OCI-LY7 (cell line): ENCODE measurements at regions of chr1 and their contacts with region 1.

Region 1: GRCh38 chr1:61049850-61050540 is 32.4 kb upstream of the NFIA start:
- DNase-seq: peak; percentile 81
- H3K4me3 ChIP-seq: peak overlapping the region; percentile 71
- H3K27ac ChIP-seq: no peak overlapping the region
- H3K4me1 ChIP-seq: peaks cover 10% of the 10 kb centered on the region
- CTCF ChIP-seq: peak; percentile 94

Region 2: DNA sequence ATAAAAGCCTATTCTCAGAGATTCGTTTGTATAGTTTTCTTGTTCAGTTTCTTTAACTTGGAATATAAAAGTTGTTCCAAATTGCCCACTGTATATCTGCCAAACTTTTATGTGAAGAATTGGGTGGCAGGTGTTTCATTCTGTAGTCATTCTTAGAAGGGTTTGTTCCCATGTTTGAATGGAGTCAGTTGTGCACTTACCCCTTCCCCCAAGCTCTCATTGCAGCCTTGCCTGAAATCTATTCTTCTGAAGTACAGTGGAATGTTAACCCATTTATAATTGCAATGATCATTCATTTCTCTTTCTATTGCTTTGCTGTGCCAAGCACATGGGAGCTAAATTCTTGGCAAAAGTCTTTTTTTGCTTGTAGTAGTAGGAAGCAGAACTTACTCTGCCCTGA is 601.1 kb before region 1 on chr1:
- CTCF ChIA-PET with region 1: no interaction called
- POLR2A ChIA-PET with region 1: no interaction called
- intact Hi-C with region 1: no loop called
- DNase-seq: no peak
- H3K4me3 ChIP-seq: no peak overlapping the region
- H3K27ac ChIP-seq: no peak overlapping the region
- H3K4me1 ChIP-seq: no peaks in the 10 kb centered on the region
- CTCF ChIP-seq: no peak

Region 3: DNA sequence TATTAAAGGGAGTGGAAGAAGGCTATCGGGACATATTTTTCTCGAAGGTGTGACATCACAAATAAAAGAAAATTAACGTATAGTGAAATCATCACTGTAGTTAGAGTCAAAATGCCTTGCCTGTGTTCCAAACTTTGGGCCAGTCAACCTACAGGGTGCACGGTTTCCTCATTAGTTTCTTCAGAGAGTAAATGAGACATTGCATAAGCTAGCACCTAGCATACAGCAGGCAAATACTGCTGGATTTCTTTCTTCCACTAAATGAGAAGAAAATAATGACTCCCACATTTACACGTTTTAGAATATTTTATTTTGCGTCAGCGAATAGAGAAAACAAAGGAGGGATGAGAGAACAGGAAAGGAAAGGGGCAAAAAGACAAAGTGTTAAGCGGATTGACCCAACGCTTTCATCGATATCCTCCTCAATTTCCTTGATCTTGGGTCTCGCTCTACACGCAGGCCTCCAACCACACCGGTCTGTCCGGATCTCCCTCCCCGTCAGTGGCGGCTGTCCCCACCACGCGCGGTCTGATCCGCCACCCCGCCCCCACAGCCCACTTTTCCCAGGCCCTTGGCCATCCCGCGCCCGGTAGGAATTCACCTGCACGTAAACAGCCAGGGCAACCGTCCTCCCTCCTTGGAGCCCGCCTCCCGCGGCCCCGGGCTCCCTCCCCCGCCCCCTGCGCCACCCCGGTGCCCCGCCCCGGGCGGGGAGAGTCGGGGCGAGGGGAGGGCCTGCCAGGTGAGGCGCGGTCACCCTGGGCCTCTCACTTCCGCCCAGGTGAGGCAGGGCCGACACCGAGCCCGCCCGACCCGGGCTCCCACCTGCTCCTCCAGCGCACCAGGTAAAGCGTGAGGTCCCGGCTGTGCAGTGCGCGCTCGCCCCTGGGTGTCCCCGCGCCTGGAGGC is 692.0 kb after region 1 on chr1 and contains the start of gene PATJ:
- CTCF ChIA-PET with region 1: no interaction called
- POLR2A ChIA-PET with region 1: no interaction called
- intact Hi-C with region 1: loop called (anchors 10 kb)
- DNase-seq: peak; percentile 51
- H3K4me3 ChIP-seq: peak within 1 kb of the TSS; percentile 77
- H3K27ac ChIP-seq: no peak within 1 kb of the TSS
- H3K4me1 ChIP-seq: peaks cover 21% of the 10 kb centered on the region
- CTCF ChIP-seq: no peak
- total RNA-seq, gene PATJ: 2.3 and 4.0 TPM in 2 replicates